HepG2 (cell line): ENCODE measurements at regions of chr20 and their contacts with region 1.

Region 1: DNA sequence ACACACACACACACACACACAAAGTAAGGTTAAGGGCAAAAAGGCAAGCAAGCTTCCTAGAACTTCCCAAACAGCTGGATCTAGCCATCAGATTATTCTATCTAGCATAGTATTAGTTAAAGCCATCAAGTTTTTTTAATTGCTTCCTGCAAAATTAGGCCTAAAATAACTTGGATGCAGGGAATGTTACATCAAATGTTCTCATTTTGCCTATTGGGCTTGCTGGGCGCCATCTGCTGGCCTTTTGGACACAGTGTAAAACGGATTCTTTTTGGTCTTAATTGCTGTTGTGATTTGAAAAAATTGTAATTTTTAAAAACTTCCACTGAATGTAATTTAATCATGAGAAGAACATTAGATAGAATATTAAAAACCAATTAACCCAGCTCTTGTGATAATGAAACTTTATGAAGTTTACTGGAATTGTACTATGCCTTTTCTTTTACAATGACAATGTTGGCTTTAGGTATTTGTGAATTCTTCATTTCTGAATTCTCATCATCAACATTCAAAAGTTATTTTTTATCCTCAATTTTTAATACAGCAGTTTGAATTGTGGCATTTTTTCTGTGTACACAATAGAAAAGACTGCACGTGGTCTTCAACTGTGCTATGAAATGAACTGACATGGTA is 6.8 kb downstream of the MKKS start:
- DNase-seq: peak; percentile 71
- ATAC-seq: peak; percentile 42; the same call in 1 of the 3 replicates
- H3K4me3 ChIP-seq: no peak overlapping the region
- H3K27ac ChIP-seq: no peak overlapping the region
- H3K4me1 ChIP-seq: peaks cover 65% of the 10 kb centered on the region
- H3K27me3 ChIP-seq: no peaks in the 10 kb centered on the region
- CTCF ChIP-seq: peak; percentile 83
- EP300 ChIP-seq: no peak
- POLR2A ChIP-seq: no peak
- RAD21 ChIP-seq: peak; percentile 84

Region 2: DNA sequence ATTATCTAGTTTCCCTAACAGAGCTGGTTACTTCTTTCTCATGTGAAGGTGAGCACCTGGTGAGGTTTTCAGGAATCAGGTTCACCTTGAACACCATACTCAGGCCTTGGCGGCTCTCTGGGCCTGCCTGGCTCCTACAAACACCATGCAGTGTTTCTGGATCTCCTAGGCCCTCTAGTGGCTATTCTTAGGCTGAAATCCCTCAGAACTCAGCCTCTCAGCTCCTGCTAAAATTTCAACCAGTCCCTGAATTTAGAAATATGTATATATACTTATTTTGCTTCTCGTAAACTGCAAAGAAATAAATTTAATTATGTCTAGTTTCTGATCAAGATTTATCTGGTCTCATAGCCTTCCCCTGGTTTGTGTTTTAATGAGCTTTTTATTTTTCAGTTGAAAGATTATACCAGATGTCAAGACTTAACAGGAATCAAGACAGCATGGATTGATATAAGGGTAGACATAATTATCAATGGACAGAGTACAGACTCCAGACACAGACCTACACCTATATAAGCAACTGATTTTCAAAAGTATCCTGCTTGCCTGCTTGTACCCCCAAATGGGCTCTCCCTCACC is 336.5 kb before region 1 on chr20:
- CTCF ChIA-PET with region 1: interaction called, 5 read pairs
- POLR2A ChIA-PET with region 1: no interaction called
- in situ Hi-C with region 1: no loop called
- intact Hi-C with region 1: loop called (anchors 2 kb)
- DNase-seq: peak; percentile 63
- ATAC-seq: peak; percentile 99
- H3K4me3 ChIP-seq: no peak overlapping the region
- H3K27ac ChIP-seq: no peak overlapping the region
- H3K4me1 ChIP-seq: no peaks in the 10 kb centered on the region
- H3K27me3 ChIP-seq: no peaks in the 10 kb centered on the region
- CTCF ChIP-seq: peak; percentile 84
- EP300 ChIP-seq: no peak
- POLR2A ChIP-seq: no peak
- RAD21 ChIP-seq: peak; percentile 78

Region 3: GRCh38 chr20:10225439-10226060 is 201.6 kb before region 1 on chr20:
- CTCF ChIA-PET with region 1: no interaction called
- POLR2A ChIA-PET with region 1: no interaction called
- in situ Hi-C with region 1: no loop called
- intact Hi-C with region 1: loop called (anchors 2 kb)
- DNase-seq: peak; percentile 54
- ATAC-seq: peak; percentile 89
- H3K4me3 ChIP-seq: no peak overlapping the region
- H3K27ac ChIP-seq: no peak overlapping the region
- H3K4me1 ChIP-seq: peaks cover 9% of the 10 kb centered on the region
- H3K27me3 ChIP-seq: 0 out of 5 replicates have a peak, but pooled peaks cover 0 to 1% of the 10 kb centered on the region in 2 experiments
- CTCF ChIP-seq: peak; percentile 47
- EP300 ChIP-seq: no peak
- POLR2A ChIP-seq: no peak
- RAD21 ChIP-seq: peak; percentile 34; the same call in 1 of the 2 replicates

Region 4: DNA sequence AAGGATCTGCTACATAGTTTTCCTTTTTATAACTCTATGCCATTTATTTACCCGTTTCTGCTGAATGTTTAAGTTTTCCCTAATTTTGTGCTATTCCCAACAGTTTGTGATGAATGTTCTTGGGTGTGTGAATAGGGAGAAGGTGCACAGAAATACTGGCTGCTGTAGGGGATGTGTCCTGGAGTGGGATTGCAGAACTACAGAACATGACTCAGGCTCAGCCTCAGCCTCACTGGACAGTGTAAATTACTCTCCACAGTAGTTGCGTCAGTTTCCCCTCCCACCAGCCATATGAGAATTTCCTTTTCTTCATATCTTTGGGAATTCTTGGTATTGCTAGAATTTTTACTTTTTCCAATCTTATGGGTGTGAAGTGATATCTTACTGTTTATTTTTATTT is 64.9 kb after region 1 on chr20:
- CTCF ChIA-PET with region 1: no interaction called
- POLR2A ChIA-PET with region 1: no interaction called
- in situ Hi-C with region 1: no loop called
- intact Hi-C with region 1: no loop called
- DNase-seq: no peak
- ATAC-seq: no peak
- H3K4me3 ChIP-seq: no peak overlapping the region
- H3K27ac ChIP-seq: no peak overlapping the region
- H3K4me1 ChIP-seq: peaks cover 11% of the 10 kb centered on the region; the same call in 1 of the 2 replicates
- H3K27me3 ChIP-seq: no peaks in the 10 kb centered on the region
- CTCF ChIP-seq: no peak
- EP300 ChIP-seq: no peak
- POLR2A ChIP-seq: no peak
- RAD21 ChIP-seq: no peak

Region 5: DNA sequence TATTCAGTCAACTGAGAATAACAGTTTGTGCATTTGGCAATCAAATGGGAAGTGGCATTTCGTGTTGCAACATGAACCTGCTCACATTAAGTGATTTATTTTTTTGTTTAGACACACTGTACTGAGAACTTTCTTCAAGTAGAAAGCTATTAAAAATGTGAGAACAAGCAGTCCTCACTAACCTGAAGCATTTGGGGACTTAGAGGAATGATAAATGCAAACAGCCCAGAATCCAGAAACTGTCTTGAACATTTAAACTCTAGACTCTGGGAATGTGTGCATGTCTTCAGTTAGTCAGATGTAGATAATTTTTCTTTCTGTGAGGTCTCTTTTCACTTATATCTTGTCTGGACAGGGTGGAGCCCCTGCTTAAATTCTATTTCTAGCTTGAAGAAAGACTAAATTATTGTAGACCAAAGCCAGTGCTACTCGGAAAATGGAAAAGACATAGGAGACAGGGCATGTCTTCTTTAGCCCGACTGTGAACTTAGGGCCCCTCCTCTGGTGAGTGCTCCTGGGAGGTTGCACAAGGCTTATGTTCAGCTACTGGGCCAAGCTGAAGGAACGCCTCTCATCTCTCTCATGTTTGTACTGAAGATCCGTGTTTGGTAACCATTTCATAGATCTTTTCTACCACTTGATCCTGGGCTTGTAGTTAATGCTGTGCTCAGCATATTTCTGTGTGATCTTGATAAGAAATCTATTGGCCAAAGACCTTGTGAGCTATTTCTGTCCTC is 78.0 kb after region 1 on chr20:
- CTCF ChIA-PET with region 1: no interaction called
- POLR2A ChIA-PET with region 1: no interaction called
- in situ Hi-C with region 1: no loop called
- intact Hi-C with region 1: no loop called
- DNase-seq: no peak
- ATAC-seq: no peak
- H3K4me3 ChIP-seq: no peak overlapping the region
- H3K27ac ChIP-seq: no peak overlapping the region
- H3K4me1 ChIP-seq: peaks cover 16% of the 10 kb centered on the region
- H3K27me3 ChIP-seq: no peaks in the 10 kb centered on the region
- CTCF ChIP-seq: no peak
- EP300 ChIP-seq: no peak
- POLR2A ChIP-seq: no peak
- RAD21 ChIP-seq: no peak

Region 6: GRCh38 chr20:10553326-10553984 is 126.3 kb after region 1 on chr20:
- CTCF ChIA-PET with region 1: no interaction called
- POLR2A ChIA-PET with region 1: no interaction called
- in situ Hi-C with region 1: no loop called
- intact Hi-C with region 1: no loop called
- DNase-seq: peak; percentile 84
- ATAC-seq: peak; percentile 70
- H3K4me3 ChIP-seq: no peak overlapping the region
- H3K27ac ChIP-seq: peak overlapping the region; percentile 7
- H3K4me1 ChIP-seq: peaks cover 79% of the 10 kb centered on the region
- H3K27me3 ChIP-seq: no peaks in the 10 kb centered on the region
- CTCF ChIP-seq: peak; percentile 96
- EP300 ChIP-seq: no peak
- POLR2A ChIP-seq: no peak
- RAD21 ChIP-seq: peak; percentile 97